Caco-2 (cell line): ENCODE measurements at regions of chr1 and their contacts with region 1.

Region 1: GRCh38 chr1:224939844-224940425 is 10.5 kb downstream of the DNAH14 start:
- DNase-seq: no peak
- H3K4me3 ChIP-seq: no peak overlapping the region
- H3K4me3 Mint-ChIP-seq: no peak overlapping the region
- H3K27ac Mint-ChIP-seq: no peak overlapping the region
- H3K4me1 ChIP-seq: no peaks in the 10 kb centered on the region
- H3K4me1 Mint-ChIP-seq: no peaks in the 10 kb centered on the region
- H3K27me3 ChIP-seq: no peaks in the 10 kb centered on the region
- H3K27me3 Mint-ChIP-seq: no peaks in the 10 kb centered on the region
- CTCF ChIP-seq: no peak

Region 2: GRCh38 chr1:224747578-224747977 is 192.4 kb before region 1 on chr1:
- CTCF ChIA-PET with region 1: no interaction called
- POLR2A ChIA-PET with region 1: no interaction called
- intact Hi-C with region 1: no loop called
- DNase-seq: no peak
- H3K4me3 ChIP-seq: no peak overlapping the region
- H3K4me3 Mint-ChIP-seq: no peak overlapping the region
- H3K27ac Mint-ChIP-seq: no peak overlapping the region
- H3K4me1 ChIP-seq: no peaks in the 10 kb centered on the region
- H3K4me1 Mint-ChIP-seq: no peaks in the 10 kb centered on the region
- H3K27me3 ChIP-seq: no peaks in the 10 kb centered on the region
- H3K27me3 Mint-ChIP-seq: peaks cover 22% of the 10 kb centered on the region
- CTCF ChIP-seq: no peak

Region 3: DNA sequence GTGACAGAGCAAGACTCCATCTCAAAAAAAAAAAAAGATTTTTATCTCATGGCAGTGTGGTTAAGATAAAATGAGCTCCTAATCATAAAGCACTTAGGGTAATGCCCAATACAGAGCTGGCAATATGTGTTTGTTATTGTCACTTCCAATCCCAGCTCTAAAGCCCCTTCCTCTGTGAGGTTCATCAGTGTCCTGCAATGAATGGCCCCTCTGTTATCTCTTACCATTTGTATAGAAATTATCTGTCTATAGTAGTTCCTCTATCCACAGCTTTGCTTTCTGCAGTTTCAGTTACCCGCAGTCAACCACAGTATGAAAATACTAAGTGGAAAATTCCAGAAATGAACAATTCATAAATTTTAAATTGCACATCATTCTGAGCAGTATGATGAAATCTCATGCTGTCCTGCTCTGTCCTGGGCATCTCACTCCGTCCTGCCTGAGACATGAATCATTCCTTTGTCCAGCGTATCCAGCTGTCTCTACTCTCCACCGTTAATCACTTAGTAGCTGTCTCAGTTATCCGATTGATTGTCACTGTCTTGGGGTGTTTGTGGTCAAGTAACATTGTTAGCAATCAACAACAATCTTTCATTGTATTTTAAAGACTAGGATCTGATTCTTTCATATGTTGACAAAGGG is 60.7 kb before region 1 on chr1:
- CTCF ChIA-PET with region 1: no interaction called
- POLR2A ChIA-PET with region 1: no interaction called
- intact Hi-C with region 1: no loop called
- DNase-seq: no peak
- H3K4me3 ChIP-seq: no peak overlapping the region
- H3K4me3 Mint-ChIP-seq: no peak overlapping the region
- H3K27ac Mint-ChIP-seq: peak overlapping the region; percentile 91
- H3K4me1 ChIP-seq: peaks cover 61% of the 10 kb centered on the region
- H3K4me1 Mint-ChIP-seq: peaks cover 38% of the 10 kb centered on the region
- H3K27me3 ChIP-seq: no peaks in the 10 kb centered on the region
- H3K27me3 Mint-ChIP-seq: no peaks in the 10 kb centered on the region
- CTCF ChIP-seq: no peak

Region 4: GRCh38 chr1:225063722-225064121 is 123.8 kb after region 1 on chr1:
- CTCF ChIA-PET with region 1: no interaction called
- POLR2A ChIA-PET with region 1: no interaction called
- intact Hi-C with region 1: loop called (anchors 5 kb)
- DNase-seq: no peak
- H3K4me3 ChIP-seq: no peak overlapping the region
- H3K4me3 Mint-ChIP-seq: no peak overlapping the region
- H3K27ac Mint-ChIP-seq: no peak overlapping the region
- H3K4me1 ChIP-seq: no peaks in the 10 kb centered on the region
- H3K4me1 Mint-ChIP-seq: no peaks in the 10 kb centered on the region
- H3K27me3 ChIP-seq: no peaks in the 10 kb centered on the region
- H3K27me3 Mint-ChIP-seq: no peaks in the 10 kb centered on the region
- CTCF ChIP-seq: no peak